Motor neuron (in vitro differentiated cells): ENCODE measurements at regions of chr17 and their contacts with region 1.

Region 1: GRCh38 chr17:65888649-65889048 is 303.3 kb downstream of the CEP112 start:
- ATAC-seq: no peak
- H3K4me3 ChIP-seq: no peak overlapping the region
- H3K27ac ChIP-seq: no peak overlapping the region
- H3K4me1 ChIP-seq: peaks cover 0 to 13% of the 10 kb centered on the region in 2 donors

Region 2: GRCh38 chr17:65988081-65988850 is 99.6 kb after region 1 on chr17:
- in situ Hi-C with region 1: loop called in 1 of 9 experiments (anchors 25 kb)
- ATAC-seq: peak in 3 of 8 experiments; percentile 57 to 70 (median 64)
- H3K4me3 ChIP-seq: no peak overlapping the region
- H3K27ac ChIP-seq: no peak overlapping the region
- H3K4me1 ChIP-seq: no peaks in the 10 kb centered on the region

Region 3: DNA sequence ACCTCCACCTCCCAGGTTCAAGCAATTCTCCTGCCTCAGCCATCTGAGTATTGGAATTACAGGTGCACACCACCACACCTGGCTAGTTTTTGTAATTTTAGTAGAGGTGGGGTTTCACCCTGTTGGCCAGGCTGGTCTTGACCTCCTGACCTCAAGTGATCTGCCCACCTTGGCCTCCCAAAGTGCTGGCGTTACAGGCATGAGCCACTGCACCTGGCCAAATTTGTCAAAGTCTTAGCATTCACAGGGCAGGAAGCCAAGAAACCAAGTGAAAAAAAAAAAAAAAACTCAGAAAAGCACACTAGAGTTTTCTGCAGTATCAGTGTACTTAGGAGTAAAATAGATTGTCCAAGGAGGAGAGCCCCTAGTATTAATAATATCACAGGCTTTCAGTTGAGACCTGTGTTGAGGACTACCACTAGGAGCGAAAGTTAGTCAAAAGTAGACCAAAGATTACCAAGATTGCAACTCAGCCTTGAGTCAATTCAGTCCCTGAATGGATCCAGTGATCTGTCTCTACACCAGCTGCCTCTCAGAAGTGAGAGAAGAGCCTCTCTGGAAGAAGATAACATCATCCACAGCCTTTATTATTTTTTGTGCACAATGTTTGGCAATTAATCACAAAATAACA is 143.5 kb after region 1 on chr17:
- in situ Hi-C with region 1: no loop called
- ATAC-seq: no peak
- H3K4me3 ChIP-seq: no peak overlapping the region
- H3K27ac ChIP-seq: no peak overlapping the region
- H3K4me1 ChIP-seq: no peaks in the 10 kb centered on the region